Activated CD4-positive, alpha-beta T cell treated with anti-CD3 and anti-CD28 coated beads, Interleukin-2, amount 10 ng/mL, durations not matched to agents 24 days and 14 days (primary cell): ENCODE measurements at regions of chr10 and their contacts with region 1.

Region 1: DNA sequence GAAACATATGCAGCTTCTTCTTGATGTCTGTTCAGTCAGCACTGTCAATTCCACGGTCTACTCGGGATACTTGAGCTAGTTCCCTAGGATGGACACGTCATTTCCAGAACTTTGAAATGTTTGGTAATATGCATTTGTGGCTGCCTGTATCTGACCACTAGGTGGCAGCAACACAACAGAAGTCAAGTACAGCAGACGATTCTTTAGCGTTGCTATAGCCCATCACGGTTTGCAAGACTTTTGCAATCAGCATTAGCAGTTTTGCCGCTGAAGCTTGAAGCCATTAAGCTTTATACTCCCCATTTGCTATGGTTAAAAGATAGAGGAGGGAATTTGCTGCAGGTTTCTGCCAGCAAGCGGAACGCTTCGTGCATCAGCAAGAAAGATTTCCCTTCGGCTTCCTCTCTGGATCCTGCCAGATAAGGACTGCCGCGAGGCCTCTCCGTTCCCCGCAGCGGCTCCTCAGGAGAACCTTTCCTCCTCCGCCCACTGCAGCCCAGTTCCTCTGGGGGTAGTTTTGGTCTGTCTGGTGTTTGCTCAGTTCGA is 63.5 kb downstream of the ABCC2 start:
- DNase-seq: peak; percentile 92
- H3K4me3 Mint-ChIP-seq: peak overlapping the region; percentile 36
- H3K27ac Mint-ChIP-seq: no peak overlapping the region
- H3K4me1 Mint-ChIP-seq: peaks cover 4% of the 10 kb centered on the region
- H3K27me3 Mint-ChIP-seq: no peaks in the 10 kb centered on the region

Region 2: DNA sequence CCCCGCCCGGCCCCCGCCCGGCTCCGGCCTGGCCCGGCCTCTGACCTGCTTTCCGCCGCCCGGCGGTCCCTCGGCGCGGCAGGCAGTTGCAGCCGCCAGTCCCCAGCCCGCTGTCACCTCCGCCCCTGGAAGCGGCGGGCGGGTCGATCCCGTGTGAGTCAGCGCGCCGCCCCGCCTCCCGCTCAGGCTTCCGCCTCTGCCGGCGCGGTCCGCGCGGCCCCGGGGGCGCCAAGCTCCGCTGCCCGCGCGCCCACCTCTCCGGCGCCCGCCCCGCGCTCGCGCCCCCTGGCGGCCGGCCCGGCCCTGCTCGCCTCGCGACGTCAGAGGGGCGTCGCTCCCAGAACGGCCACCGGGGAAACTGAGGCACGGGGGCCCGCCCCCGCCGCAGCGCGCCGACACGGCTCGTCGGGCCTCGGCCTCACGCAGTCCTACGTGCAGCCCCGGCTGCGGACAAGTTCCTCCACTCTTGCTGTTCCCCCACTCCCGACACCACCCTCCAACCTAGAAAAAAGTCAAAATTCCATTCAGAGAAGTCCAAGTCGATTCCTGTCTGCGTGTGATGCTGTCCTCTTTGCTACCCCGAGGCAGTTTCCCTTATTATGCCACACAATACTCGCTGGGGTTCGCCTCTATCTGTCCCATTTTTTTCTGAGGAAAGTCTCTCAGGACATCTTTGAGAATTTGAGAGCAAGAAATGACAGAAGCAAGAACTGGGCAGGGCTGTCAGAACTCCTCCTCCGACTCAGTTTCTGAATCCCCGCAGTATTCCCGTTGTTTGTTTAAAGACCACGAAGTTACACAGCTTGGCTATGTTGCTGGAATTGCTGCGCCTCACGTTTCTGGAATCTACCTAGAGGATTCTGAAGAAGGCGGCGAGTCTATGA is 164.1 kb after region 1 on chr10 and contains the start of gene DNMBP:
- intact Hi-C with region 1: loop called (anchors 1 kb)
- DNase-seq: peak; percentile 95
- H3K4me3 Mint-ChIP-seq: peak within 1 kb of the TSS; percentile 89
- H3K27ac Mint-ChIP-seq: peak within 1 kb of the TSS; percentile 78
- H3K4me1 Mint-ChIP-seq: peaks cover 37% of the 10 kb centered on the region
- H3K27me3 Mint-ChIP-seq: peaks cover 31% of the 10 kb centered on the region
- total RNA-seq, gene DNMBP: 1.3 TPM in 2 replicates

Region 3: GRCh38 chr10:100046021-100046486 is 200.1 kb after region 1 on chr10:
- intact Hi-C with region 1: loop called (anchors 1 kb)
- DNase-seq: peak; percentile 93
- H3K4me3 Mint-ChIP-seq: no peak overlapping the region
- H3K27ac Mint-ChIP-seq: no peak overlapping the region
- H3K4me1 Mint-ChIP-seq: no peaks in the 10 kb centered on the region
- H3K27me3 Mint-ChIP-seq: peaks cover 3% of the 10 kb centered on the region

Region 4: GRCh38 chr10:100148353-100149211 is 302.7 kb after region 1 on chr10:
- intact Hi-C with region 1: loop called (anchors 1 kb)
- DNase-seq: no peak
- H3K4me3 Mint-ChIP-seq: peak overlapping the region; percentile 29
- H3K27ac Mint-ChIP-seq: peak overlapping the region; percentile 84
- H3K4me1 Mint-ChIP-seq: peaks cover 15% of the 10 kb centered on the region
- H3K27me3 Mint-ChIP-seq: peaks cover 3% of the 10 kb centered on the region